AG04450 (cell line): ENCODE measurements at regions of chr4 and their contacts with region 1.

Region 1: DNA sequence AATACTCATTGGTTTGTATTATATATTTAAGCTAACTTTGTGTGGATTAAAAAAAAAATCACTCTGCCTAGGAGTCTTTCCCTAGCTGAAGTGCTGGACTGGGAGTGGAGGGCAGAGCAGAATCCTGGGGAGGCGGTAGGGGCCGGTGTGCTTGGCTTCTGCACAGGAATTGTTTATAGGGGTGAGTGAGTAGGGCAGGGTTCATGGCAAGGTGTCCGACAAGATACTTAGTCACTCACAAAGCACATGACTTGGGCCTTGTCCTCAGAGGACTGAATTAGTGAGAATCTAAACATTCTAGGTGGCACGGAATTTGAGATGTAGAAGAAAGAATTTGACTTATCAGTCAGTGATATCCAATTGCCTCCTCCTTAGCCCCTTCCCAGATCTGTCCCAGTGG is 32.2 kb downstream of the FNIP2 start:
- DNase-seq: no peak
- H3K4me3 ChIP-seq: no peak overlapping the region
- H3K27ac ChIP-seq: no peak overlapping the region
- H3K27me3 ChIP-seq: no peaks in the 10 kb centered on the region
- CTCF ChIP-seq: no peak

Region 2: GRCh38 chr4:158754385-158755180 is 46.5 kb before region 1 on chr4:
- CTCF ChIA-PET with region 1: no interaction called
- POLR2A ChIA-PET with region 1: interaction called, 11 read pairs
- DNase-seq: no peak
- H3K4me3 ChIP-seq: no peak overlapping the region
- H3K27ac ChIP-seq: peak overlapping the region; percentile 47
- H3K27me3 ChIP-seq: no peaks in the 10 kb centered on the region
- CTCF ChIP-seq: no peak